Activated CD4-positive, alpha-beta memory T cell treated with anti-CD3 and anti-CD28 coated beads for 36 hours (primary cell): ENCODE measurements at regions of chr3 and their contacts with region 1.

Region 1: DNA sequence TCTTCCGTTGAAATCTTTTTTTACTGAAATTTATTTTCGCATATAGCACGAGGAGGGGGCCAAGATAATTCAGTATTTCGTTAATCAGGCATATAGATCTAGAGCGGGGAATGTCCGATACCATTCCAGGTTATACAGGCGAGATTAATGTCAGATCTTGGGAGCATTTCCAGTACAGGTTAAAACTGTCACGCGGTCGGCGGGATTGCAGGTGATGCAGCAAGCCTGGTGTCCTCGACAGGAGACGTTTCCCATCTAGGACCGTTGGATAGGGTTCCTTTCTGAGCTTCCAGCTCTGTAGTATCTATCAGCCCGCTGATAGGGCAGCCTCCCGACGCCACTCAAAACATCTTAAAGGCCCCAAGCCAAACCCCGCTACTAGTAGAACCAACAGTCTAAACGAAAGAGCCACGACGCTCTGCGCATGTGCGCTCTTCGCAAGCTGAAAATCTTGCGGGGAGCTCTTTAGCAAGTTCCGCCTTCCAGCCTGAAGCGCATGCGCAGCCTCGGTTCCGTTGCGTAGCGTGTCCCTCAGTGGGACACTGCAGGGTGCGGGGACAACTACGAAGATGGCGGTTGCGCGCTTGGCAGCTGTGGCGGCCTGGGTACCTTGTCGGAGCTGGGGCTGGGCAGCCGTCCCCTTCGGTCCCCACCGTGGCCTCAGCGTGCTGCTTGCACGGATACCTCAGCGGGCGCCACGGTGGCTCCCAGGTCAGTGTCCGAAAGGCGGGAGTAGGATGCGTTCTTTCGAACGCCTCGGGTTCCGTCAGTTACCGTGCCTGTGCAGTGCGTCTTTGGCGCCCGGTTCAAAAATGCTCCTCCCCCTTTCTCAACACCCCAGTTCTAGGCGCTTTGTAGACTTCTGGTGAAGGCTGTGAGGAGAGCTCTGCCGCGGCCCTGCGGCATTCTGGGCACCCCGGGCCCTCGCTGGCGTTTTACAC is at the start of gene ABHD10:
- DNase-seq: peak; percentile 98
- H3K4me3 Mint-ChIP-seq: peak within 1 kb of the TSS; percentile 90
- H3K27ac Mint-ChIP-seq: peak within 1 kb of the TSS; percentile 91
- H3K4me1 Mint-ChIP-seq: peaks cover 37% of the 10 kb centered on the region
- H3K27me3 Mint-ChIP-seq: no peaks in the 10 kb centered on the region
- total RNA-seq, gene ABHD10: 79.8 to 84.2 TPM

Region 2: GRCh38 chr3:111547631-111548030 is 431.1 kb before region 1 on chr3:
- CTCF ChIA-PET with region 1: no interaction called
- POLR2A ChIA-PET with region 1: interaction called, 4 read pairs
- intact Hi-C with region 1: loop called (anchors 5 kb)
- DNase-seq: peak; percentile 71
- H3K4me3 Mint-ChIP-seq: no peak overlapping the region
- H3K27ac Mint-ChIP-seq: no peak overlapping the region
- H3K4me1 Mint-ChIP-seq: peaks cover 43% of the 10 kb centered on the region
- H3K27me3 Mint-ChIP-seq: no peaks in the 10 kb centered on the region

Region 3: GRCh38 chr3:111668912-111669488 is 309.8 kb before region 1 on chr3:
- CTCF ChIA-PET with region 1: interaction called, 12 read pairs
- POLR2A ChIA-PET with region 1: no interaction called
- intact Hi-C with region 1: no loop called
- DNase-seq: no peak
- H3K4me3 Mint-ChIP-seq: no peak overlapping the region
- H3K27ac Mint-ChIP-seq: no peak overlapping the region
- H3K4me1 Mint-ChIP-seq: peaks cover 74% of the 10 kb centered on the region
- H3K27me3 Mint-ChIP-seq: no peaks in the 10 kb centered on the region

Region 4: DNA sequence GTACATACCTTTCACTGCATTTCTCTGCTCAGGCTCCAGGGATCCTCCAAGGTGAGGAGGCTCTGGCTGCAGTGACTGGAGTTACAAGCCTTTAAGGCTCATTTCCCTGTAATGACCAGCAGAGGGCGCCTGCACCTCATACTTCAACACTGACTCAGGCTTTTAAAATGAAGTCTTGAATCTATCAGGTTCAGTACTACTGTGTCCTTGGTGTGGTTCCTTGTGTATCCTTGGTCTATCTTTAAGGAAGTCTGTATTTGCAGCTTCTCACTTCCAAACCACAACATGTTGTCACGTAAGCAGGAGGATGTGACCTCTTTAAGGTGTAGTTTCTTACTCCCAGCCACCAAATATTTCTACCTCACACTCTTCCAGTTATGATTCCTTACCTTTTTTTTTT is 261.2 kb before region 1 on chr3:
- CTCF ChIA-PET with region 1: interaction called, 278 read pairs
- POLR2A ChIA-PET with region 1: no interaction called
- intact Hi-C with region 1: no loop called
- DNase-seq: peak; percentile 79
- H3K4me3 Mint-ChIP-seq: no peak overlapping the region
- H3K27ac Mint-ChIP-seq: no peak overlapping the region
- H3K4me1 Mint-ChIP-seq: no peaks in the 10 kb centered on the region
- H3K27me3 Mint-ChIP-seq: no peaks in the 10 kb centered on the region

Region 5: DNA sequence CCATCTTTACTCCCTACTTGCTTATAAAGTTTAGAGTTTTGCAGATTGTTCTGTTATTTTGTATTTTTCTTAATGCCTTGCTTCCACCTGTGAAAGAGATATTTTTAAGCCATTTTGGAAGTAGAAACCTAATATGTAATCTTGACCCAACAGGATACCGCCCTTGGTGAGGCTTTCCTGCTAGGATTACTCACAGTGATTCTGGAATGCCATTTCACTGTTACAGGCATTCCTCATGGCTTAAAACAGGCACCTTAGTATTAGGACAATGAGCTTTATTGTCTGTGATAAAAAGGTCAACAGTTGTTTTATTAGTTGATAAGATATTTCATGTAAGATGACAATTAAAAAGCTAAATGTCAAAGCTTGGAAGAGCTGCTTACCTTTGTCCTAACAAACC is 61.5 kb before region 1 on chr3:
- CTCF ChIA-PET with region 1: no interaction called
- POLR2A ChIA-PET with region 1: no interaction called
- intact Hi-C with region 1: no loop called
- DNase-seq: no peak
- H3K4me3 Mint-ChIP-seq: no peak overlapping the region
- H3K27ac Mint-ChIP-seq: no peak overlapping the region
- H3K4me1 Mint-ChIP-seq: no peaks in the 10 kb centered on the region
- H3K27me3 Mint-ChIP-seq: no peaks in the 10 kb centered on the region

Region 6: DNA sequence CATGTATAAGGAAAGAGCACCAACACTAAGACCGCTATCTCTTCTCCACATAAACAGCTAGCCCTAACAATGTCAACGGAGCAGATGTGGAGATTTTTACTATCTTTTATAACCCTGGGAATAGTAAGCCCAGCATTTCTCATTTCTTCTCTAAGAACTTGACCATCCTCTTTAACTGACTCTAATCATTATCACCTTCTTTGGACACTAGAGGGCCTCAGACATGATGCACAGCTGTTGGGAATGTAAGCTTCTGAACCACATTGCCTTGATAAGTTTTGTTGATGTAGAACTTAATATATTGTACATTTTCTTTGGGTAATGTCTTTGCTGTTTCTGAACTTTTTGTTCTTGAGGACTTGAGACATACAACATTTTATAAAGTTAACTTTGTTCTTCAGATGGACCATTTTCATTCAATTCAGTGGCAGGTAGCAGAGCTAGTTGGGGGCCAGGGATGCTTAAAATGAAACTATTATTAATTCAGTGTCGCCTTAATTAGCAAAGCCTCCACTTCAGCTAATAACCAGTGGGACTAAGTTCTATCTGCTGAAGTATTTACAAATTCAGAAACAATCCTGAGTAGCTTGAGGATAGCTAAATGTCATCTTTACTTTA is 10.4 kb after region 1 on chr3:
- CTCF ChIA-PET with region 1: interaction called, 21 read pairs
- POLR2A ChIA-PET with region 1: interaction called, 4 read pairs
- intact Hi-C with region 1: no loop called
- DNase-seq: no peak
- H3K4me3 Mint-ChIP-seq: no peak overlapping the region
- H3K27ac Mint-ChIP-seq: no peak overlapping the region
- H3K4me1 Mint-ChIP-seq: peaks cover 27% of the 10 kb centered on the region
- H3K27me3 Mint-ChIP-seq: no peaks in the 10 kb centered on the region

Region 7: GRCh38 chr3:112007633-112008032 is 28.9 kb after region 1 on chr3:
- CTCF ChIA-PET with region 1: interaction called, 55 read pairs
- POLR2A ChIA-PET with region 1: interaction called, 13 read pairs
- intact Hi-C with region 1: loop called (anchors 1 kb)
- DNase-seq: no peak
- H3K4me3 Mint-ChIP-seq: no peak overlapping the region
- H3K27ac Mint-ChIP-seq: no peak overlapping the region
- H3K4me1 Mint-ChIP-seq: peaks cover 29% of the 10 kb centered on the region
- H3K27me3 Mint-ChIP-seq: no peaks in the 10 kb centered on the region

Region 8: GRCh38 chr3:112056451-112056978 is 77.8 kb after region 1 on chr3:
- CTCF ChIA-PET with region 1: interaction called, 3 read pairs
- POLR2A ChIA-PET with region 1: no interaction called
- intact Hi-C with region 1: loop called (anchors 2 kb)
- DNase-seq: peak; percentile 53
- H3K4me3 Mint-ChIP-seq: peak overlapping the region; percentile 1
- H3K27ac Mint-ChIP-seq: peak overlapping the region; percentile 25
- H3K4me1 Mint-ChIP-seq: peaks cover 25% of the 10 kb centered on the region
- H3K27me3 Mint-ChIP-seq: peaks cover 11% of the 10 kb centered on the region